ENCODE measurements at regions of chr1 and their contacts with region 1.

Region 1: DNA sequence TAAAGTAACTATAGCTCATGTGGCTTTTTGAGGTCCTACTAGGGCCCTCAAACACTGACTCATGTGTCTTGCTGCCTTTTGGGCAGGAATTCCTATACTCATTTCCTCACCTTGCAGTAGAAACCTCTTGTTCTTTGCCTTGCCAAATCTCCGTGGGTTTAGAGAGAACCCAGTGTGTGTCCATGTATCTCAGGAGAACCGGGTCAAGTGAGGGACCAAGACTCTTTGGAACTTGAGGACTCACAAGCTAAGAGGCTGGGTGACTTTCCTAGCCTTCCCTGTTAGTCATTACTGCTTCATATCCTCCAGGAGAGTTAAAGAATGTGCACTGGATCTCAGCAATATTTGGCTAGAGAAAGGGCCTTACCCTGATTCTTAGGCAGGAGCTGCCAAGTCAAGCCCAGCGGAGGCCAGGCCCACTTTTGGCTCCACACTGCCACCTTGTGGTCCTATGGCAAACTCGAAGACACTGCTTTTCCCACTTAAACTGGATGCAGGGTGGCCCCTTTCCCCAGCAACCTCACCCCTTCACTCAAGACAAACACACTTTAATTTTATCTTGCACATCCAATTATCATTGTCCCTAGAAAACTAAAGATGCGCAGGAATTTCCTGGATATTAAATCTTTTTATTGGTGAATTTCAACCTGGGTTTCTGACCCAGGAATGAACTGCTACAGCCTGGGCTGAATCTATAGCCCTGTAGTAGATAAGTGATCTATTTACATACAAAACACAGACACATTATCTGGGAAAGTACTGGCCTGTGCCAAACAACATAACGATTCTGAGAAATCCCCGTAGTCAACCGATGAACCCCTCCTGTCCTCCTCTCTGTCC is 10.6 kb downstream of the AVPR1B start:
- DNase-seq: peak; percentile 92

Region 2: GRCh38 chr1:205766038-205766437 is 340.5 kb before region 1 on chr1:
- CTCF ChIA-PET with region 1: no interaction called
- POLR2A ChIA-PET with region 1: no interaction called
- DNase-seq: no peak

Region 3: DNA sequence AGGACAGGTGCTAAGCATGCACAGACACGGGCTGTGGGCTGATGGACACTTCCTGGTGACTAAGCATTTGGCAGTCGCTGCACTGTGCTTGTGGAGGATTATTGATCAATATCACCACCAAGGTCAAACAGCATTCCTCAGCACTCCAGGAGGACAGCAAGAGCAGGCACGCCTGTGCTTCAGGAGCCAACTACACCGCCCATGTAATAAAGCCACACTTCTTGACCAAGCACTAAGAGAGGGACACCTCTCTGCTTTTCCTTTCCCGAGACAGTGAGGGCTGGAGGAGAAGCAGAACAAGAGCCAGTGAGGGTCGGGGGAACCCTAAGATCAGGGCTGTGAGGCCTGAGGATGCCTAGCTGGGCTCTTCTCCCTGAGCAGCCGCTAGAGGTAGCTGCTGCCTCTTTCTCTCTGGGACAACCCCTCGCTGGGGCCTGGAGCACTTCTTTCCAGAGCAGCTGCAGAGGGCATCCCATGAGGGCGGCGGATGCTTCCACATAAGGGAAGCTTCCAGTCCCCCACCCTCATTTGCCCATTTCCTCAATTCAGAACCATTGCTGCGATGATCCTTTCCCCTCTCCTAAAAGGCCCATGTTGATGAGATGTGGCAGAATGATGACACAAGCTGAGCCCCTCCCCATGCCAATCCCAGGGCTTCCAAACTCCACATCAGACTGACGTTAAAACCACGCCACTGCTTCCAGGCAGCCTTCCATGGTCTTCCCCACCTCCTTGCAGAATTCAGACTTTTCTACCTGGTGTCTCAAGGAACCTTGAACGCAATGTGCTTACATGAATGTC is 122.4 kb before region 1 on chr1:
- CTCF ChIA-PET with region 1: interaction called, 22 read pairs
- POLR2A ChIA-PET with region 1: no interaction called
- DNase-seq: peak; percentile 77

Region 4: GRCh38 chr1:206030714-206031113 is 75.8 kb before region 1 on chr1:
- CTCF ChIA-PET with region 1: interaction called, 26 read pairs
- POLR2A ChIA-PET with region 1: no interaction called
- DNase-seq: peak; percentile 79